ENCODE measurements at regions of chr7 and their contacts with region 1.

Region 1: DNA sequence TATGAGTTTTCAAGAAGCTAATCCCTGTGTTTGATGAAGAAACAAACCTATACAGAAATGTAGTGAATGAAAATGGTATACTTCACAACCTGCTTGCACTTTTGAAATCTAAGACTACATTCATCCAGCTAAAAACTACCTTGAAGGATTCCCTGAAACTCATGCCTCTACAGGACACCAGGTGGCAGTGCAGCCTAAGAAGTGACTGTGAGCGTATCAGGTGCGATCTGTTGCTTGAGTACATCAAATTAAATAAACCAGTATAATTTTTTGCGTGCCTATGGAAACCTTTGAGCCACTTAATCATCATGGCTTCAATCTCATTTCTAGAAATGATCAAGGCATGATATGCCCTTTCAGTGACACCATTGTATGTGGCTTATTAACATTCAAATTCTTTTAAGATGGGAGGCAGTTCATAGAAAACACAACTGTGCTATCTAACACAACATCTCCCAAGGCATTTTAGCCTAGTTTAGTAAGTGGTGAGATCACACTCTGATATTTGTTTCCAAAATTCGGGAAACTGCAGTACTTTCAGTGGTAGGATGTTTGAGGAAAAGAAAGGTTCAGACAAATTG is 57.4 kb downstream of the PPP1R17 start:
- DNase-seq: peak; percentile 22
- ATAC-seq: no peak
- H3K4me3 ChIP-seq: no peak overlapping the region
- H3K4me3 Mint-ChIP-seq: no peak overlapping the region
- H3K27ac ChIP-seq: no peak overlapping the region
- H3K27ac Mint-ChIP-seq: no peak overlapping the region
- H3K4me1 ChIP-seq: no peaks in the 10 kb centered on the region
- H3K4me1 Mint-ChIP-seq: no peaks in the 10 kb centered on the region
- H3K27me3 ChIP-seq: peaks cover 0 to 3% (median 0%) of the 10 kb centered on the region in 4 experiments
- H3K27me3 Mint-ChIP-seq: peaks cover 25% of the 10 kb centered on the region
- CTCF ChIP-seq: peak; percentile 65

Region 2: GRCh38 chr7:32347244-32347828 is 603.0 kb after region 1 on chr7:
- CTCF ChIA-PET with region 1: no interaction called
- POLR2A ChIA-PET with region 1: no interaction called
- intact Hi-C with region 1: loop called (anchors 5 kb)
- DNase-seq: peak; percentile 4
- ATAC-seq: no peak
- H3K4me3 ChIP-seq: no peak overlapping the region
- H3K4me3 Mint-ChIP-seq: no peak overlapping the region
- H3K27ac ChIP-seq: no peak overlapping the region
- H3K27ac Mint-ChIP-seq: no peak overlapping the region
- H3K4me1 ChIP-seq: no peaks in the 10 kb centered on the region
- H3K4me1 Mint-ChIP-seq: no peaks in the 10 kb centered on the region
- H3K27me3 ChIP-seq: no peaks in the 10 kb centered on the region
- H3K27me3 Mint-ChIP-seq: peaks cover 5% of the 10 kb centered on the region
- CTCF ChIP-seq: peak; percentile 65

Measured in B cell (primary cell).